Heart right ventricle (tissue), 16 donors: ENCODE measurements at regions of chr17 and their contacts with region 1.

Region 1: GRCh38 chr17:1055751-1056645 is 59.1 kb downstream of the TIMM22 start:
- DNase-seq: peak; percentile 64 to 75
- ATAC-seq: peak; percentile 61 to 83 (median 82)
- H3K4me3 ChIP-seq: no peak overlapping the region
- H3K27ac ChIP-seq: peak overlapping the region in 7 of 10 donors; percentile 4 to 61 (median 34)
- H3K4me1 ChIP-seq: peaks cover 2 to 28% (median 13%) of the 10 kb centered on the region in 9 donors
- H3K27me3 ChIP-seq: no peaks in the 10 kb centered on the region
- CTCF ChIP-seq: peak; percentile 77 to 88 (median 83)

Region 2: DNA sequence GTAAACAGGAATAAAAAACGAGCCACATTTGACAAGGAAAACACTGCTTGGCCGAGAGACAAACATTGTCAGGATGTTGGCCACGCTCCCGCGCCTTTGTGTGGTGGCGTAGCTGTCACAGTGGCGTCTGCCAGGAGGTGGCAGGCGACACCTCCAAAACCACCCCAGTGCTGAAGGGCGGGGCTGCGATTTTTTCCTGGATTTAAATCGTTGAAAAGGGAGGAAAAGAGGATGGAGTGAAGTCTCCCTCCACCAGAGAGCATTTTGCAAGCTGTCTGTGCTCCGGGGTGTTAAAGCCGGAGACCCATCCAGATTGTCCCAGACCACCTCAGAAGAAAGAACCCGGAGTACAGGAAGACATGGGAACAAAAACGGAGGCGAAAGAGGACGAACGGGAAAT is 261.1 kb before region 1 on chr17:
- intact Hi-C with region 1: loop called in 8 of 10 experiments (anchors 5 to 10 kb)
- DNase-seq: peak; percentile 88 to 89
- ATAC-seq: peak; percentile 40 to 90 (median 78)
- H3K4me3 ChIP-seq: peak overlapping the region in 9 of 10 donors; percentile 27 to 53 (median 43)
- H3K27ac ChIP-seq: peak overlapping the region in 9 of 10 donors; percentile 25 to 71 (median 55)
- H3K4me1 ChIP-seq: peaks cover 0 to 36% (median 15%) of the 10 kb centered on the region in 9 donors
- H3K27me3 ChIP-seq: no peaks in the 10 kb centered on the region
- CTCF ChIP-seq: peak; percentile 85 to 97 (median 86)

Region 3: GRCh38 chr17:996554-997344 is 59.2 kb before region 1 on chr17 and contains the start of gene TIMM22:
- intact Hi-C with region 1: loop called in 6 of 10 experiments (anchors 2 to 5 kb)
- DNase-seq: peak; percentile 91 to 95
- ATAC-seq: peak; percentile 93 to 97 (median 96)
- H3K4me3 ChIP-seq: peak within 1 kb of the TSS; percentile 74 to 100 (median 92)
- H3K27ac ChIP-seq: peak within 1 kb of the TSS; percentile 83 to 95 (median 93)
- H3K4me1 ChIP-seq: peaks cover 19 to 50% (median 43%) of the 10 kb centered on the region in 9 donors
- H3K27me3 ChIP-seq: no peaks in the 10 kb centered on the region
- CTCF ChIP-seq: peak; percentile 85 to 98 (median 94)
- total RNA-seq, gene TIMM22: 15.0 to 19.8 (median 18.5) TPM

Region 4: DNA sequence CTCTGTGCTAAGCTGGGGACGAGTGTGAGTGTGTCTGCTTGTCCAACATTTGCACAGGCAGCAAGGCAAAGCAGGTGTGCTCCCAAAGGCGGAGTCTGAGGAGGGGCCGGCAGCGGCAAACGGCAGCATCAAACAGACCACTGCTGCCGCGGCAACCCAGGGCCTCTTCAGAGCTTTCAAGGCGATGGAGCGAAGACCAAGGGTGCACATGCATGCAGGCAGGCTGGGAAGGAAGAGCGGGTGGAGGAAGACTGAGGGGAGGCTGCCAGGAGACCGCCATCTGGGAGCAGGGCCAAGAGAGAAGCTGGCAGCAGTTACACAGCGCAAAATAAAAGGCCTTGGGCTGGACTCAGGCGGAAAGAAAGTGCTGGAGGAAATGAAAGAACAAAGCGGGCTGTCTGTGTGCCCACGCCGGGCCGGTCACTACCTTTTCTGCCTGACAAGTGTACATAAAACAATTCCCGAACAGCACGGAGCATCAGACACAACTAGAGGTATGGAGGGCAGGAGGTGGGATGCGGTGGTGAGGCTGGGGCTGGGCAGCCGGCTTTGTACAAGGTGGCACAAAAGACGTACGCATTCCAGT is 50.5 kb before region 1 on chr17:
- intact Hi-C with region 1: loop called in 7 of 10 experiments (anchors 2 to 5 kb)
- DNase-seq: peak; percentile 65 to 72
- ATAC-seq: peak in 7 of 8 donors; percentile 16 to 53 (median 49)
- H3K4me3 ChIP-seq: no peak overlapping the region
- H3K27ac ChIP-seq: peak overlapping the region; percentile 9 to 90 (median 78)
- H3K4me1 ChIP-seq: peaks cover 55 to 96% (median 88%) of the 10 kb centered on the region in 9 donors
- H3K27me3 ChIP-seq: no peaks in the 10 kb centered on the region
- CTCF ChIP-seq: no peak

Region 5: GRCh38 chr17:1108861-1109605 is 53.0 kb after region 1 on chr17:
- intact Hi-C with region 1: loop called in 1 of 10 experiments (anchors 5 kb)
- DNase-seq: peak; percentile 68 to 80
- ATAC-seq: peak in 7 of 8 donors; percentile 4 to 73 (median 28)
- H3K4me3 ChIP-seq: peak overlapping the region; percentile 45 to 92 (median 74)
- H3K27ac ChIP-seq: peak overlapping the region; percentile 93 to 98 (median 97)
- H3K4me1 ChIP-seq: peaks cover 33 to 91% (median 76%) of the 10 kb centered on the region in 9 donors
- H3K27me3 ChIP-seq: no peaks in the 10 kb centered on the region
- CTCF ChIP-seq: no peak

Region 6: DNA sequence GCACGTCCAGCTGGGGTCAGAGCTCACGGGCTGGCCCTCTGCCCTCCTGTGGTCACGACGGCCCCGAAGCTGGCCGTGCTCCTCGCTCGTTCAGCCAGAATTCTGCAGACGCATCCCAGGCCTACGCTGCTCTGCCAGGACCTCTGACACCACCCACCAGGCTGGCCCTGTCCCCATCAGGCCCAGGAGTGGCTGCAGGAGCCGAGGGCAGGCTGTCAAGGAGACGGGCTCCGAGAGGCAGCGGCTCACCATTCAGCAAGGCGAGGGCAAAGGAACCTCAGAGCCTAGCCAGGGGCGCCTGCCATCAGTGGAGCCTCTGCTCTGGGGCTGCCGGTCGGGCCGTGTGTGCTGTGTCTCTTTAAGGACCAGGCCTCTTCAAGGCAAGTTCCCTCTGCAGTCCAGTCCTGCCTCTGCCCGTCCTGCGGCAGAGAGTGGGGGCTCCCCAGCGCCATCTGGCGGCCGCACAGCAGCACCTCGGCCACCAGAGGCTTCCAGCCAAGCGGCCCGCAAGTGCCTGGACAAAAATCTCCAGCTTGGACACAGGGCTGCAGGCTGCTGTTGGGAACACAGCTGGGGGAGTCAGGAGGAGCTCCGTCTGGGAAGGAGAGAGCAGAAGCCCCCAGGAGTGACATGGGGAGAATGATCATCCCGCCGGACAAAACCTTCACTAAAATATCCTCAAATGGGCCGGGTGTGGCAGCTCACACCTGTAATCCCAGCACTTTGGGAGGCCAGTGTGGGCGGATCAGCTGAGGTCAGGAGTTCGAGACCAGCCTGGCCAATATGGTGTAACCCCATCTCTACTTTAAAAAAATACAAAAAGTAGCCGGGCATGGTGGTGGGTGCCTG is 131.1 kb after region 1 on chr17:
- intact Hi-C with region 1: loop called in 1 of 10 experiments (anchors 10 kb)
- DNase-seq: peak; percentile 86 to 90
- ATAC-seq: peak; percentile 88 to 95 (median 92)
- H3K4me3 ChIP-seq: peak overlapping the region; percentile 2 to 54 (median 46)
- H3K27ac ChIP-seq: peak overlapping the region; percentile 57 to 93 (median 85)
- H3K4me1 ChIP-seq: peaks cover 25 to 74% (median 58%) of the 10 kb centered on the region in 9 donors
- H3K27me3 ChIP-seq: no peaks in the 10 kb centered on the region
- CTCF ChIP-seq: peak; percentile 97 to 99 (median 99)

Region 7: DNA sequence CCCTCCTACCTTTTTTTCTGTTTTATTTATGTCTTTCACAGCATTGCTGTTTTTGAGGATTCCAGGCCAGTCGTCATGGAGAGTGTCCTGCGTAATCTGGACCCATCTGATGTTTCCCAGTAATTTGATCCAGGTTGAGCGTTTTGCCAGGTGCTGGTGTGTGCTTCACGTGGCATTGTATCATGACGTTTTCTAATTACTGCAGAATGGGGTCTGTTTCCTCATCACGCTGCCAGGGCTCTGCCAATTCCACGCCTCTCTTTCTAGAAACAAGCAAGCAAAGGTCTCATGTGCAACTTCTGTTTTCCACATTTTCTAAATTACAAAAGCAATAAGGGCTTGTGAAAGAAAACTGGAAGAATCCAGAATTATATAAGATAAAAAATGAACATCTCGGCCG is 185.9 kb after region 1 on chr17:
- intact Hi-C with region 1: no loop called
- DNase-seq: no peak
- ATAC-seq: peak in 1 of 8 donors; percentile 49
- H3K4me3 ChIP-seq: no peak overlapping the region
- H3K27ac ChIP-seq: no peak overlapping the region
- H3K4me1 ChIP-seq: no peaks in the 10 kb centered on the region
- H3K27me3 ChIP-seq: peaks cover 0 to 15% (median 0%) of the 10 kb centered on the region in 7 donors
- CTCF ChIP-seq: no peak